Heart left ventricle (tissue), 16 donors: ENCODE measurements at regions of chr6 and their contacts with region 1.

Region 1: DNA sequence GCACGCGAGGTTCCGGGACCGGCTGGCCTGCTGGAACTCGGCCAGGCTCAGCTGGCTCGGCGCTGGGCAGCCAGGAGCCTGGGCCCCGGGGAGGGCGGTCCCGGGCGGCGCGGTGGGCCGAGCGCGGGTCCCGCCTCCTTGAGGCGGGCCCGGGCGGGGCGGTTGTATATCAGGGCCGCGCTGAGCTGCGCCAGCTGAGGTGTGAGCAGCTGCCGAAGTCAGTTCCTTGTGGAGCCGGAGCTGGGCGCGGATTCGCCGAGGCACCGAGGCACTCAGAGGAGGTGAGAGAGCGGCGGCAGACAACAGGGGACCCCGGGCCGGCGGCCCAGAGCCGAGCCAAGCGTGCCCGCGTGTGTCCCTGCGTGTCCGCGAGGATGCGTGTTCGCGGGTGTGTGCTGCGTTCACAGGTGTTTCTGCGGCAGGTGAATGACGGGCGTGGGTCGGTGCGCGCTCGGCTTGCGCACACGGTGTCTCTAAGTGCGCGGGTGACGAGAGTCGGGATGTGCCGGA is at the start of gene CDKN1A:
- DNase-seq: peak; percentile 90 to 95 (median 94)
- ATAC-seq: peak; percentile 77 to 89 (median 82)
- H3K4me3 ChIP-seq: peak within 1 kb of the TSS; percentile 69 to 96 (median 86)
- H3K27ac ChIP-seq: peak within 1 kb of the TSS; percentile 93 to 100 (median 99)
- H3K4me1 ChIP-seq: peaks cover 0 to 68% (median 38%) of the 10 kb centered on the region in 12 donors
- H3K27me3 ChIP-seq: no peaks in the 10 kb centered on the region
- CTCF ChIP-seq: peak in 3 of 12 donors; percentile 8 to 35 (median 13)
- POLR2A ChIP-seq: peak; percentile 94 to 100
- total RNA-seq, gene CDKN1A: 27.5 to 164 (median 99.8) TPM

Region 2: DNA sequence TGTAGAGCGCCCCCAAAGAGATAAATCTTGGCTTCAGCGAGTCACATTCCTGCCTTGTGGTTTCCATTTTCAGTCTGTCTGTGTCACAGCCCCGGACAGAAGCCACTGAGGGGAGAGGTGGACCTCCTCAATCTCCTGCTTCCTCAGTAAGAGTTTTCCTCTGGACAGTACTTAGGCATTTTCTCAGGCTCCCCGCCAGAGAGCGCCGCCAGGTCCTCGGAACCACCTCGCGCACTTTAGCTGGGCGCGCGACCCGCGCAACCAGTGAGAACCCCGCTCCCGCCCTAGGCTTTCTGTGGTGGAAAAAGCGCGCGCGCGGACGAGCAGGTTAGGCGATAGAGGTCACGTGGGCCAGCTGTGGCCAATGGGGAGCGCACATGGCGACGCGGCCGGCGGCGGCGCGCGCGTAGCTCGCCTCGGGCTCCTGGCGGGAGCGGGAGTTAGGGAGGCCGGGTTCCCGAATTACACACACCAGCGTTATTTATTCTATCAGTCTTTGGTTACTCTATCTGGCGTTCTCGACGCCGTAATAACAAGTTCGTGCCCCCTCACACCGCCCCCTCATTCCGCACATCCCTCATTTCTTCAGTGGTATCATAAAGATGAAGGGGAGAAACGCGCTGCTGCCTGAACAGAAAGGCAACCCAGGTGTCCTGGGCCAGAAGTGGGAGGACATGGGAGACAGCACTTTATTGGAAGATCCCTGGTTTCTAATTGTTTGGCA is 255.3 kb before region 1 on chr6:
- intact Hi-C with region 1: loop called in 4 of 10 experiments (anchors 5 to 10 kb)
- DNase-seq: peak; percentile 99
- ATAC-seq: peak; percentile 100
- H3K4me3 ChIP-seq: peak overlapping the region in 11 of 12 donors; percentile 35 to 67 (median 56)
- H3K27ac ChIP-seq: peak overlapping the region in 11 of 12 donors; percentile 55 to 87 (median 71)
- H3K4me1 ChIP-seq: peaks cover 0 to 13% (median 6%) of the 10 kb centered on the region in 12 donors
- H3K27me3 ChIP-seq: no peaks in the 10 kb centered on the region
- CTCF ChIP-seq: peak; percentile 45 to 87 (median 64)
- POLR2A ChIP-seq: peak in 1 of 2 donors; percentile 71

Region 3: DNA sequence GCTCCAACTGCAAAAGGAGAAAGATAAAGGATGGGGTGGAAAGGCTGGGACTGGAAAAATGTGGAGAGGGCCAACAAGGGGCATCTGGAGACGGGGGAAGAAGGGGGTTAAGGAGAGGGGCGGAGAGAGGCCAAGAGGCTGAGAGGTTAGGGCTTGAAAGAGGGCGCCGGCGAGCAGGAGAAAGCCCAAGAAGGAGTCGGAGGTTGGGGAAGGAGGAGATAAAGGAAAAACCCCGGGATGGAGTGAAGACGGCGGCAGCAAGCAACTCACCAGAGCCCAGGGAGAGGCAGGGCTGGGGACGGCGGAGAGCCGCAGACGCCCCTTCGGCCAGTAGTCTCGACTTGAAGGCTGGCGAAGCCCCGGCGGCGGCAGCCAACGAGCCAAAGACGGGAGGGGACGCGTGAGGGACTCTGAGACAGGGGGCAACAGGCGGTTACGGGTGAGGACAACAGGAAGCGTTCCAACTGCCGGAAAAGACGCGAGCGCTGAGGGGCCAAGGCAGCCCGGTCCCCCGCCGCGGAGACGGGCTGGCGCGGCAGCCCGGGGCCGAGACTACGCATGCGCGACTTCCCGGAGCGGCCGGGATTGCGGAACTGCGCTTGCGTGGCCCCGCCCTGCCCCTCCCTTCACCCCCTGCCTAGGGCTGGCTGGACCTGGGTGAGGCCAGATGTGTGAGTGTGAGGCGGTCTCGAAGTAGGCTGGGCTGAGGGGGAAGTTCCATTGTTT is 131.5 kb before region 1 on chr6 and contains the start of gene STK38:
- intact Hi-C with region 1: loop called in 1 of 10 experiments (anchors 10 kb)
- DNase-seq: peak; percentile 94 to 97 (median 95)
- ATAC-seq: peak; percentile 93 to 99 (median 96)
- H3K4me3 ChIP-seq: peak within 1 kb of the TSS; percentile 82 to 100 (median 94)
- H3K27ac ChIP-seq: peak within 1 kb of the TSS; percentile 96 to 100 (median 98)
- H3K4me1 ChIP-seq: peaks cover 0 to 54% (median 34%) of the 10 kb centered on the region in 12 donors
- H3K27me3 ChIP-seq: no peaks in the 10 kb centered on the region
- CTCF ChIP-seq: peak in 4 of 12 donors; percentile 7 to 35 (median 22)
- POLR2A ChIP-seq: peak; percentile 96 to 98
- total RNA-seq, gene STK38: 14.3 to 32.8 (median 21.2) TPM

Region 4: GRCh38 chr6:36623547-36624459 is 54.8 kb before region 1 on chr6:
- intact Hi-C with region 1: loop called (anchors 1 to 5 kb)
- DNase-seq: peak; percentile 85 to 90 (median 87)
- ATAC-seq: peak; percentile 52 to 79 (median 62)
- H3K4me3 ChIP-seq: no peak overlapping the region
- H3K27ac ChIP-seq: peak overlapping the region in 2 of 12 donors; percentile 43 to 67
- H3K4me1 ChIP-seq: peaks cover 0 to 67% (median 27%) of the 10 kb centered on the region in 12 donors
- H3K27me3 ChIP-seq: no peaks in the 10 kb centered on the region
- CTCF ChIP-seq: peak; percentile 71 to 93 (median 86)
- POLR2A ChIP-seq: no peak

Region 5: DNA sequence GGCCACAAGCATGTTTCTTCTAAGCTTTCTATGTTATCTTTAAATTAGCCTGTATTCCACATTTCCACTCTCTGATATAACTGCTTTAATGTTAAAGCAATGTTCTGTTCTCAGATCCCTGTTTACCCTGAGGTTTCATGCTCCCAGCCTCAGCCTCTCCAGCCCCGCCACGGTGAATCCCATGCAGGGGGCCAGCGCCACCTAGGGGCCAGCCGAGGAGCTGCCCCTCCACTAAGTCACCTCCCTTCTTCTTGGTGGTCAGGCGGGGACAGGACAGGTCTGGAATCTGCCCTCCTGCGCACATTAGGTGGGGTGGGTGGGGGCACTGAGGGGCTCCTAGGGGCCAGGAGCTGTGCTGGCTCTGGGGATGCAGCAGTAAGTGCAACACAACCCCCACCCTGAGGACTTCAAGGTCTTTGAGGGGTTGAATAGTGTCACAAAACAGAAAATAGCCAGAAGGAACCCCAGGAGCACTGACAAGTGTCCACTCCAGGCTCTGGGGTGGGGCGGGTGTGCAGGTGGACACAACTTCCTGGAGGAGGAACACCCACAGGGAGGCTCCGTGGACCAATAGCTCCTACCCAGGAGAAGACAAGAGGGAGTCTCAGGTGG is 80.7 kb after region 1 on chr6:
- intact Hi-C with region 1: loop called in 5 of 10 experiments (anchors 2 to 10 kb)
- DNase-seq: peak; percentile 78 to 92 (median 82)
- ATAC-seq: peak; percentile 62 to 83 (median 80)
- H3K4me3 ChIP-seq: no peak overlapping the region
- H3K27ac ChIP-seq: no peak overlapping the region
- H3K4me1 ChIP-seq: peaks cover 0 to 45% (median 5%) of the 10 kb centered on the region in 12 donors
- H3K27me3 ChIP-seq: no peaks in the 10 kb centered on the region
- CTCF ChIP-seq: peak; percentile 94 to 99 (median 97)
- POLR2A ChIP-seq: no peak

Region 6: GRCh38 chr6:36874443-36875249 is 196.1 kb after region 1 on chr6 and contains the start of gene PPIL1:
- intact Hi-C with region 1: no loop called
- DNase-seq: peak; percentile 82 to 89 (median 86)
- ATAC-seq: peak; percentile 84 to 94 (median 89)
- H3K4me3 ChIP-seq: peak within 1 kb of the TSS; percentile 66 to 96 (median 85)
- H3K27ac ChIP-seq: peak within 1 kb of the TSS; percentile 68 to 96 (median 90)
- H3K4me1 ChIP-seq: peaks cover 0 to 32% (median 16%) of the 10 kb centered on the region in 12 donors
- H3K27me3 ChIP-seq: no peaks in the 10 kb centered on the region
- CTCF ChIP-seq: peak in 2 of 12 donors; percentile 5 to 10
- POLR2A ChIP-seq: peak in 1 of 2 donors; percentile 77
- total RNA-seq, gene PPIL1: 30.9 to 61.6 (median 42.6) TPM